Activated CD8-positive, alpha-beta T cell treated with anti-CD3 and anti-CD28 coated beads, Interleukin-2, amount 10 ng/mL, durations not matched to agents 7 days and 5 days (primary cell): ENCODE measurements at regions of chr14 and their contacts with region 1.

Region 1: DNA sequence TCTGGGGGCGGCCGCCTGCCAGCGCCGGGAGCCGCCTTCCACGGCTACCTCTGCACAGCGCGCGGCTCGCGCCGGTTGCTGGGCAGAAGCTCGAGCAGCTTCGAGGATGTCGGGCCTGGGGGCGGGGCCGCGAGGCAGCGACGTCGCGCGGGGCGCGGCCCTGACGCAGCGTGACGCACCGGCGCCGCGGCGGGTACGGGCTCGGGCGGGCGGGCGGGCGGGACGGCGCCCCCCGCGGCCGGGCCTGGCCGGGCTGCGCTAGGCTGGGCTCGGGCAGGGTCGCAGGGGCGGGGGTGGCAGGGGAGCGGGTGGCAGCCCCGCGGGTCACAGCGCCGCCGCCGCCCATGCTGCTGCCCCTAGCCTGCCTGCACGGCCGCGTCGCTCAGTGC is at the start of gene BTBD6:
- DNase-seq: peak; percentile 90
- ATAC-seq: peak; percentile 96
- H3K4me3 Mint-ChIP-seq: peak within 1 kb of the TSS; percentile 80
- H3K27ac Mint-ChIP-seq: peak within 1 kb of the TSS; percentile 82
- H3K4me1 Mint-ChIP-seq: peaks cover 43% of the 10 kb centered on the region
- H3K27me3 Mint-ChIP-seq: no peaks in the 10 kb centered on the region
- total RNA-seq, gene BTBD6: 53.7 to 59.8 TPM

Region 2: GRCh38 chr14:105300792-105301533 is 52.6 kb after region 1 on chr14 and contains the start of gene BRF1:
- CTCF ChIA-PET with region 1: no interaction called
- POLR2A ChIA-PET with region 1: interaction called, 15 read pairs
- DNase-seq: peak; percentile 100
- ATAC-seq: peak; percentile 91
- H3K4me3 Mint-ChIP-seq: peak within 1 kb of the TSS; percentile 87
- H3K27ac Mint-ChIP-seq: peak within 1 kb of the TSS; percentile 95
- H3K4me1 Mint-ChIP-seq: peaks cover 47% of the 10 kb centered on the region
- H3K27me3 Mint-ChIP-seq: no peaks in the 10 kb centered on the region
- total RNA-seq, gene BRF1: 42.1 to 44.7 TPM

Region 3: GRCh38 chr14:105314287-105315200 is 66.2 kb after region 1 on chr14 and contains the start of gene PACS2:
- CTCF ChIA-PET with region 1: no interaction called
- POLR2A ChIA-PET with region 1: no interaction called
- DNase-seq: peak; percentile 75
- ATAC-seq: peak; percentile 80
- H3K4me3 Mint-ChIP-seq: peak within 1 kb of the TSS; percentile 88
- H3K27ac Mint-ChIP-seq: peak within 1 kb of the TSS; percentile 84
- H3K4me1 Mint-ChIP-seq: peaks cover 37% of the 10 kb centered on the region
- H3K27me3 Mint-ChIP-seq: no peaks in the 10 kb centered on the region
- total RNA-seq, gene PACS2: 32.9 to 38.5 TPM

Region 4: GRCh38 chr14:105351920-105352851 is 103.8 kb after region 1 on chr14:
- CTCF ChIA-PET with region 1: interaction called, 10 read pairs
- POLR2A ChIA-PET with region 1: no interaction called
- DNase-seq: peak; percentile 94
- ATAC-seq: peak; percentile 97
- H3K4me3 Mint-ChIP-seq: no peak overlapping the region
- H3K27ac Mint-ChIP-seq: peak overlapping the region; percentile 43
- H3K4me1 Mint-ChIP-seq: peaks cover 3% of the 10 kb centered on the region
- H3K27me3 Mint-ChIP-seq: no peaks in the 10 kb centered on the region